H1 (cell line): ENCODE measurements at regions of chr21 and their contacts with region 1.

Region 1: GRCh38 chr21:30340441-30341241 is 3.1 kb upstream of the KRTAP27-1 start:
- DNase-seq: peak in 1 of 2 experiments; percentile 63
- H3K4me3 ChIP-seq: no peak overlapping the region
- H3K27ac ChIP-seq: no peak overlapping the region
- H3K4me1 ChIP-seq: no peaks in the 10 kb centered on the region
- H3K27me3 ChIP-seq: no peaks in the 10 kb centered on the region
- CTCF ChIP-seq: peak; percentile 17 to 82 (median 72)
- EP300 ChIP-seq: no peak
- POLR2A ChIP-seq: no peak
- RAD21 ChIP-seq: peak; percentile 69 to 75

Region 2: GRCh38 chr21:30355906-30356305 is 15.3 kb after region 1 on chr21:
- CTCF ChIA-PET with region 1: interaction called, 10 read pairs
- POLR2A ChIA-PET with region 1: no interaction called
- DNase-seq: no peak
- H3K4me3 ChIP-seq: no peak overlapping the region
- H3K27ac ChIP-seq: no peak overlapping the region
- H3K4me1 ChIP-seq: peaks cover 0 to 2% (median 0%) of the 10 kb centered on the region in 4 experiments; a peak in 1 of 7 replicates
- H3K27me3 ChIP-seq: no peaks in the 10 kb centered on the region
- CTCF ChIP-seq: no peak
- EP300 ChIP-seq: no peak
- POLR2A ChIP-seq: no peak
- RAD21 ChIP-seq: no peak

Region 3: DNA sequence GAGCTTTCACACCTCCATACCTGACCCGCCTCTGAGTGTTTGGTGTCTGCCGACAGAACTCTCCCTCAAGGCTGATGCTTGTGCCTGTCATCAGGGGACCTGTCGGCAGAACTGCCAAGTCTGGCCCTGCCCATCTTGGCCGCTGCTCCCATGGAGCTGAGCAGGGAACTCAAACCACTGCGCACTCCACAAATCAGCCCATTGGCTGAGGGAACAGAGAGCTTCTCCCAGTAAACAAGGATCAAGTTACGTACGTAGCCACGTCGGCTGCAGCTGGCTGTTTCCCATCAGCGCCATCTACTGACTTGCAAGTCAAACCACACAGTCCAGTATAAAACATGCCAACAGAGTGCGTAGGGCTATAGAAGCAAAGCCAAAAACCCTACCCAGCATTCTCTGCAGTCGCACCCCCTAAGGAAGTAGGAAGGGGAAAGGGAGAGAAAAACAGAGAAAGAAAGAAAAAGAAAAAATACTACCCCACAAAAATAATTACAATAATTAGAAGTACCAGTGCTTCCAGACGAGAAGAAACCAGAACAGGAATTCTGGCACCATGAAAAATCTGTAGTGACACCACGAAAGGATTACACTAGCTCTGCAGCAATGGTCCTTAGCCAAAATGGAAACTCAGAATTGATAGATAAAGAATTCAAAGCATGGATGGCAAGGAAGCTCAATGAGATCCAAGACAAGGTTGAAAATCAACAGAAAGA is 68.3 kb after region 1 on chr21:
- CTCF ChIA-PET with region 1: interaction called, 18 read pairs
- POLR2A ChIA-PET with region 1: no interaction called
- DNase-seq: peak; percentile 74 to 95
- H3K4me3 ChIP-seq: peak overlapping the region in 1 of 4 experiments; percentile 28; a peak in 1 of 8 replicates
- H3K27ac ChIP-seq: no peak overlapping the region
- H3K4me1 ChIP-seq: peaks cover 0 to 3% (median 1%) of the 10 kb centered on the region in 4 experiments; a peak in 1 of 7 replicates
- H3K27me3 ChIP-seq: no peaks in the 10 kb centered on the region
- CTCF ChIP-seq: peak; percentile 76 to 91 (median 79)
- EP300 ChIP-seq: peak in 1 of 2 experiments; percentile 72; a peak in 1 of 3 replicates
- POLR2A ChIP-seq: 0 out of 3 replicates have a peak, but pooled peaks of 1 of the 2 experiments have one; percentile 45
- RAD21 ChIP-seq: peak; percentile 69 to 75

Region 4: DNA sequence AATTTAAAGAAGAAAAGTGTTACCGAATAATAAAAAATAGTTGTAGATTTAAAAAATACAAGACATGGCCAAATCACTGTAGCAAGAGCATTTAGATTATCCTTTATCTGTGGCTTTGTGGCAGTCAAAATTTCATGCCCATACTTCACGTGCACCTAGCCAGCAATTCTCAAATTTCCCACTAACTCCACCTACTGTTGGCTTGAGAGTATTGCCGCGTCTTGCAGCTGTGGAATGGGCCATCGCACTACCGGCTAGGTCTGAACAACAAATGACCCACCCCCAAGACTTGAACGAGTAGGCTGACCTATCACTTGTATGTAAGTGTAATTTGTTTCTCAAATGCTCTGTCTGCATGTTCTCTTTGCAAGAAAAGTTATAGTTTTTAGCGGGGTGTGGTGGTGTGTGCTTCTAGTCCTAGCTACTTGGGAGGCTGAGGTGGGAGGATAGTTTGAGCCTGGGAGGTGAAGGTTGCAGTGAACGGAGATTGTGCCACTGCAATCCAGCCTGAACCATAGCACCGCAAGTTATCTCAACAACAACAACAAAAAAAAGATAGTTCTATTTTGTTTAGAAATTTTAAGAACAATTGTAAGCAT is 93.5 kb after region 1 on chr21:
- CTCF ChIA-PET with region 1: interaction called, 14 read pairs
- POLR2A ChIA-PET with region 1: no interaction called
- DNase-seq: peak; percentile 50 to 61
- H3K4me3 ChIP-seq: no peak overlapping the region
- H3K27ac ChIP-seq: no peak overlapping the region
- H3K4me1 ChIP-seq: peaks cover 0 to 4% (median 0%) of the 10 kb centered on the region in 4 experiments; a peak in 1 of 7 replicates
- H3K27me3 ChIP-seq: no peaks in the 10 kb centered on the region
- CTCF ChIP-seq: peak; percentile 68 to 77 (median 70)
- EP300 ChIP-seq: no peak
- POLR2A ChIP-seq: no peak
- RAD21 ChIP-seq: peak; percentile 64 to 74

Region 5: GRCh38 chr21:30463713-30464112 is 123.1 kb after region 1 on chr21:
- CTCF ChIA-PET with region 1: interaction called, 21 read pairs
- POLR2A ChIA-PET with region 1: no interaction called
- DNase-seq: no peak
- H3K4me3 ChIP-seq: no peak overlapping the region
- H3K27ac ChIP-seq: no peak overlapping the region
- H3K4me1 ChIP-seq: no peaks in the 10 kb centered on the region
- H3K27me3 ChIP-seq: no peaks in the 10 kb centered on the region
- CTCF ChIP-seq: peak in 2 of 3 experiments; percentile 65 to 74; a peak in 3 of 4 replicates
- EP300 ChIP-seq: no peak
- POLR2A ChIP-seq: no peak
- RAD21 ChIP-seq: peak; percentile 75 to 76

Region 6: GRCh38 chr21:30676737-30677136 is 336.1 kb after region 1 on chr21:
- CTCF ChIA-PET with region 1: no interaction called
- POLR2A ChIA-PET with region 1: no interaction called
- DNase-seq: no peak
- H3K4me3 ChIP-seq: no peak overlapping the region
- H3K27ac ChIP-seq: no peak overlapping the region
- H3K4me1 ChIP-seq: no peaks in the 10 kb centered on the region
- H3K27me3 ChIP-seq: no peaks in the 10 kb centered on the region
- CTCF ChIP-seq: no peak
- EP300 ChIP-seq: no peak
- POLR2A ChIP-seq: no peak
- RAD21 ChIP-seq: no peak